ENCODE measurements at regions of chr9 and their contacts with region 1.

Region 1: GRCh38 chr9:94681508-94681907 is 42.2 kb upstream of the FBP1 start:
- DNase-seq: peak; percentile 95
- H3K4me3 ChIP-seq: peak overlapping the region; percentile 31; the same call in 1 of the 2 replicates
- H3K27ac ChIP-seq: peak overlapping the region; percentile 38
- H3K4me1 ChIP-seq: peaks cover 7% of the 10 kb centered on the region
- H3K27me3 ChIP-seq: no peaks in the 10 kb centered on the region

Region 2: GRCh38 chr9:94772639-94773303 is 91.3 kb after region 1 on chr9:
- in situ Hi-C with region 1: loop called (anchors 10 kb)
- DNase-seq: peak; percentile 27
- H3K4me3 ChIP-seq: no peak overlapping the region
- H3K27ac ChIP-seq: no peak overlapping the region
- H3K4me1 ChIP-seq: no peaks in the 10 kb centered on the region
- H3K27me3 ChIP-seq: no peaks in the 10 kb centered on the region

Region 3: DNA sequence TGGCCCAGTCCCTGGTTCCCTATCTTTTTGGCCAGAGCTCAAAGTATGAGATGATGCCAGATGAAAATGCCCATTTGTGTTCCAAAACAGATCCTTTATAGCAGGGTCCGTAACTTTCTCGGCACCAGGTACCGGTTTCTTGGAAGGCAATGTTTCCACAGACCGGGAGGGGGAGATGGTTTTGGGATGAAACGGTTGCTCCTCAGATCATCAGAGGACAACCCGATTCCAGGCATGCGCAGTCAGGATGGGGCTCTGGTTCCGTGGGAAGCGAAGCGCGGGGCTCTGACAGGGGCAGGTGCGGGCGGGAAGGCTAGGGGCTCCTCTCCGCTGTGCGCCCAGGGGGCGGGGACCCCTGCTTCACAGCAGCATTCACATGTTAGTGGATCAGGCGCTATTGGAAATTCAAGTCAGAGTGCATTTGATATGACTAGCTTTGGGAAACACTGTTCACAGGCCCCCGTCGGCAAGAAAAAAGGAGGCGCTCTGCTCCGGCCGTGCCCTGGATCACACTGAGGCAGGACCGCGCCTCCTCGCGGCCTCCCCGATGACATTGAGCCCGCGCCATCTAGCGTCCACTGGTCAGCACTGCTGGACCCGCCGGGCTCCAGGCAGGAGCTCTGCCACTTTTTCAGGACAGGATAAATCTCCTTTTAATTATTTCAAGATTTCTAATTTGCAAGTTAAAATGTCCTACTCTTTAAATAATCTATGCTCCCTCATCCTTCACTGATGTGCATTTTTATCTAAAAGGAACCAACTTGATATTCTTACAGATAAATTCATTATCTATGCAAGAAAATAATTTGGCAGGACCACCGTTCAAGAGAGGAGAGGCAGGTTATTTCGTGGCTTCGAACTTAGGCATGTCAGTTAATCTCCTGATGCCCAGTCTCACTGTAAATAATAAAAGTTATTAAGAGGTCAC is 446.0 kb after region 1 on chr9:
- in situ Hi-C with region 1: loop called (anchors 10 kb)
- DNase-seq: peak; percentile 94
- H3K4me3 ChIP-seq: no peak overlapping the region
- H3K27ac ChIP-seq: no peak overlapping the region
- H3K4me1 ChIP-seq: 0 out of 2 replicates have a peak, but pooled peaks cover 3% of the 10 kb centered on the region
- H3K27me3 ChIP-seq: no peaks in the 10 kb centered on the region